ENCODE measurements at regions of chr10 and their contacts with region 1.

Region 1: DNA sequence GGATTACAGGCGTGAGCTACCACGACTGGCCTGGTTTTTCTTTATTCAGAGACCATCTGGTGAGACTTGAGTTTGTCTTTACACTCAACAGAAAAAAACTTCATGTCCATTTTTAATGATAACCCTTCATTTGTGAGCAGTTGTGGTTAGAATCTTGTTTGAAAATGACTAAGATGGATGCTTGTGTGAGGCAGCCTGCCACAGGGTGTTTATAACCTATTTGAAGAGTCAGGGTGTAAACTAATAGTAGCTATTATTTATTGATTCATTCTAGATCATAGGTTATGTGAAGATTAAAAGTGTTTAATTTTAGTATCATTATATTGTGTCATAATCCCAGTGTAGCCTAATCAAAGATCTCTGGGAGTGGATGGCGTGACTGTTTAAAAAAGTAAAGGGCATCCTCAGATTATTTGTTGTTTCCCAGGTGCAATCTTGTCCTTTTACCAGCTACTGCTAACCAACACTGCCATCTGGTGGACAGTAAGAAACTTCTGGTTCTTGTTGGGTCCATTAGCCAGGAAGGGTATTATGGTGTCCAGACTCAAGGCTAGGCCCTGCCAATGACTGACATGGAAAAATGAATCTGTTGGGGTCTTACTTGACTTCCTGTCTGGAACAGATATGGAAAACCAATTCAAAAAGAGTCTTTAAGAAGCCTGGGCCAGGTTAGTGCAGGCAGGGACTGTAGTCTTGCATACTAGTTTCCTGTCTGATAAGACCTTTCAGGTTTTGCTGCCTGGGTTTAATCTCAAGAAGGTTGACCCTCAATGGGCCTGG is 24.9 kb downstream of the NRBF2 start:
- DNase-seq: no peak
- H3K4me3 ChIP-seq: no peak overlapping the region
- H3K27ac ChIP-seq: no peak overlapping the region
- H3K4me1 ChIP-seq: peaks cover 0 to 39% (median 32%) of the 10 kb centered on the region in 4 donors
- H3K27me3 ChIP-seq: no peaks in the 10 kb centered on the region
- CTCF ChIP-seq: peak; percentile 30 to 76 (median 68)
- EP300 ChIP-seq: no peak
- POLR2A ChIP-seq: no peak

Region 2: GRCh38 chr10:62437696-62438095 is 720.3 kb before region 1 on chr10:
- intact Hi-C with region 1: loop called (anchors 5 kb)
- DNase-seq: no peak
- H3K4me3 ChIP-seq: no peak overlapping the region
- H3K27ac ChIP-seq: peak overlapping the region in 1 of 4 donors; percentile 42
- H3K4me1 ChIP-seq: peaks cover 0 to 31% (median 21%) of the 10 kb centered on the region in 4 donors
- H3K27me3 ChIP-seq: no peaks in the 10 kb centered on the region
- CTCF ChIP-seq: peak; percentile 43 to 85 (median 66)
- EP300 ChIP-seq: peak in 1 of 4 donors; percentile 11
- POLR2A ChIP-seq: no peak

Region 3: GRCh38 chr10:62594093-62594520 is 563.9 kb before region 1 on chr10:
- intact Hi-C with region 1: loop called (anchors 2 kb)
- DNase-seq: no peak
- H3K4me3 ChIP-seq: no peak overlapping the region
- H3K27ac ChIP-seq: no peak overlapping the region
- H3K4me1 ChIP-seq: no peaks in the 10 kb centered on the region
- H3K27me3 ChIP-seq: no peaks in the 10 kb centered on the region
- CTCF ChIP-seq: peak; percentile 68 to 89 (median 86)
- EP300 ChIP-seq: no peak
- POLR2A ChIP-seq: no peak

Region 4: DNA sequence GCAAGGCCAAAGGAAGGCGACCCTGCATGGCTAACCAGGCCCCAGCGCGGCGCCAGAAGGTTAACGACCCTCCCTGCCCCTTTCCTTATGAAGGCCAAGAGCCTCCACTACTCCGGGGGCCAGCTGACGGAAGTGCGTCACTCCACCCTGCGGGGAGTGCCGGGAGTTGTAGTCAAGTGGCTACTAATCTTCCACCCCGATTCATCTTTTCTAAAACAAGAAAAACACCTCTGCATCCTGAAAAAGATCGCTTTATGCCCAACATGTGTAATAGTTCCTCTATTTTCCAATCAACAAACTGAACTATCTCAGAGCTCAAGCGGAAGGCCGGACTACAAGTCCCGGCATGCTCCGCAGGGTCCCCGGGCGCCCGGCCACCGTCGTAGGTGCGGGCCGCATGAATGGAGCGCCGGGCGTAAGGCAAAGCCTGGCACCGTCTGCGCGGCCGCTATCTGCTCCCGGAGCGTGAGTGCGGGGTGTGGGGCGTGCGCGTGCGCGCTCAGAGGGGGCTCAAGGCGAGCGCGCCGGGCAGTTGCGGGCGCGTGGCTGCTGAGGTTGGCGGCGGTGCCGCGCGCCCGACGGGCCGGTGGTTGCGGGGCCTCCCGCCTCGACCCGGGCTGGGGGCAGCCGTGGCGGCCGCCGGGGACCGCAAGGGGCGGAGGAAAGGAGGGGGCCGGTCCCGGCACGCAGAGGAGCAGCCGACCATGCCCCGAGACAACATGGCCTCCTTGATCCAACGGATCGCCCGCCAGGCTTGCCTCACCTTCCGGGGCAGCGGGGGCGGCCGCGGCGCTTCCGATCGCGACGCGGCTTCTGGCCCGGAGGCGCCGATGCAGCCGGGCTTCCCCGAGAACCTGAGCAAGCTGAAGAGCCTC is 353.4 kb before region 1 on chr10 and contains the start of gene ADO:
- intact Hi-C with region 1: loop called (anchors 5 kb)
- DNase-seq: peak; percentile 93
- H3K4me3 ChIP-seq: peak within 1 kb of the TSS; percentile 78 to 85 (median 78)
- H3K27ac ChIP-seq: peak within 1 kb of the TSS; percentile 91 to 95 (median 94)
- H3K4me1 ChIP-seq: peaks cover 0 to 40% (median 38%) of the 10 kb centered on the region in 4 donors
- H3K27me3 ChIP-seq: no peaks in the 10 kb centered on the region
- CTCF ChIP-seq: no peak
- EP300 ChIP-seq: peak in 1 of 4 donors; percentile 38
- POLR2A ChIP-seq: peak; percentile 6 to 31
- total RNA-seq, gene ADO: 13.0 to 18.9 (median 18.0) TPM

Region 5: DNA sequence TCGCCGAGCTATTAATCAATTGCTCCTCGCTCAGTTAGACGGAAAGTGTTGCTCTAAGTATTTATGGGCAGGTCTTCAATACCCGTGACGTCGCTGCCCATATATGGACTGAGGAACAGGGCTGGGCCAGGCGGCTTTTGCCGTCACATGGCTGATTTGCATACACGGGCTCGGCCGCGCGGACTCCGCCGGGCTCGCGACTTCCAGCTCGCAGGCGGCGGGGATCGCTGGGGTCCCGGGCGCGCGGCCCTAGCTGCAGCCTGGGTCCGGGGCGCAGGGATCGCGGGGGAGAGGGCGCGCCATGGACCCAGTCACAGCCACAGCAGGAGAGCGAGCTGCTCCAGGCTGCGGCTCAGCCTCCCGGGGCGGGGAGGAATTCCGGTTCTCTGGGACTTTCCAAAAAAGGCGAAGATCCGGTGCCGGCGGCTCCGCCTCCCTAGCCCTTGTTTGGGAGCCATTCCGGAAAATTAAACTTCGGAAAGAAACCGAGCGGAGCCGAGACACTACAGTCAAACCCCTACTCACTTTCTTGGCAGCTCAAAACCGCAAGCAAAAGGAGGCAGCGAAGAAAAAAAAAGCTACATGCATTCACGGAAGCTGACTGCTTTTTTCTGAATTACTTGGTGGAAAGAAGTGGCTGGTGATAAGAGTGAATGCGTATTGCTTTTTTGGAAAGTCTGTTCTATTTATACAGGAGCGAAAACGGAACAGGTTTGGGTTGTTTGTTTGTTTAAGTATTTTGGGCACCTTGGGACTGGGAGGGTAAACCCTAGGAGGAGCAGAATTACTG is 341.5 kb before region 1 on chr10 and contains the start of gene EGR2:
- intact Hi-C with region 1: loop called (anchors 5 kb)
- DNase-seq: peak; percentile 97
- H3K4me3 ChIP-seq: peak within 1 kb of the TSS; percentile 64 to 88 (median 78)
- H3K27ac ChIP-seq: peak within 1 kb of the TSS; percentile 79 to 95 (median 88)
- H3K4me1 ChIP-seq: peaks cover 0 to 41% (median 38%) of the 10 kb centered on the region in 4 donors
- H3K27me3 ChIP-seq: peaks cover 13 to 51% (median 24%) of the 10 kb centered on the region in 3 donors
- CTCF ChIP-seq: no peak
- EP300 ChIP-seq: no peak
- POLR2A ChIP-seq: no peak
- total RNA-seq, gene EGR2: 1.7 to 3.4 (median 1.8) TPM

Region 6: GRCh38 chr10:63083904-63084689 is 73.9 kb before region 1 on chr10:
- intact Hi-C with region 1: loop called (anchors 10 kb)
- DNase-seq: peak; percentile 89
- H3K4me3 ChIP-seq: no peak overlapping the region
- H3K27ac ChIP-seq: peak overlapping the region in 1 of 4 donors; percentile 31
- H3K4me1 ChIP-seq: peaks cover 0 to 11% (median 0%) of the 10 kb centered on the region in 4 donors
- H3K27me3 ChIP-seq: no peaks in the 10 kb centered on the region
- CTCF ChIP-seq: peak; percentile 52 to 64 (median 60)
- EP300 ChIP-seq: no peak
- POLR2A ChIP-seq: no peak

Region 7: GRCh38 chr10:63197344-63198106 is 39.5 kb after region 1 on chr10:
- intact Hi-C with region 1: no loop called
- DNase-seq: no peak
- H3K4me3 ChIP-seq: no peak overlapping the region
- H3K27ac ChIP-seq: no peak overlapping the region
- H3K4me1 ChIP-seq: peaks cover 0 to 24% (median 10%) of the 10 kb centered on the region in 4 donors
- H3K27me3 ChIP-seq: no peaks in the 10 kb centered on the region
- CTCF ChIP-seq: no peak
- EP300 ChIP-seq: no peak
- POLR2A ChIP-seq: no peak